RWPE1 (cell line): ENCODE measurements at regions of chr14 and their contacts with region 1.

Region 1: GRCh38 chr14:34322940-34323418 is 139.1 kb downstream of the SPTSSA start:
- DNase-seq: peak; percentile 59
- H3K27ac ChIP-seq: no peak overlapping the region
- CTCF ChIP-seq: peak; percentile 81

Region 2: GRCh38 chr14:32350020-32350419 is 1973.0 kb before region 1 on chr14:
- CTCF ChIA-PET with region 1: no interaction called
- POLR2A ChIA-PET with region 1: interaction called, 10 read pairs
- DNase-seq: no peak
- H3K27ac ChIP-seq: no peak overlapping the region
- CTCF ChIP-seq: no peak

Region 3: DNA sequence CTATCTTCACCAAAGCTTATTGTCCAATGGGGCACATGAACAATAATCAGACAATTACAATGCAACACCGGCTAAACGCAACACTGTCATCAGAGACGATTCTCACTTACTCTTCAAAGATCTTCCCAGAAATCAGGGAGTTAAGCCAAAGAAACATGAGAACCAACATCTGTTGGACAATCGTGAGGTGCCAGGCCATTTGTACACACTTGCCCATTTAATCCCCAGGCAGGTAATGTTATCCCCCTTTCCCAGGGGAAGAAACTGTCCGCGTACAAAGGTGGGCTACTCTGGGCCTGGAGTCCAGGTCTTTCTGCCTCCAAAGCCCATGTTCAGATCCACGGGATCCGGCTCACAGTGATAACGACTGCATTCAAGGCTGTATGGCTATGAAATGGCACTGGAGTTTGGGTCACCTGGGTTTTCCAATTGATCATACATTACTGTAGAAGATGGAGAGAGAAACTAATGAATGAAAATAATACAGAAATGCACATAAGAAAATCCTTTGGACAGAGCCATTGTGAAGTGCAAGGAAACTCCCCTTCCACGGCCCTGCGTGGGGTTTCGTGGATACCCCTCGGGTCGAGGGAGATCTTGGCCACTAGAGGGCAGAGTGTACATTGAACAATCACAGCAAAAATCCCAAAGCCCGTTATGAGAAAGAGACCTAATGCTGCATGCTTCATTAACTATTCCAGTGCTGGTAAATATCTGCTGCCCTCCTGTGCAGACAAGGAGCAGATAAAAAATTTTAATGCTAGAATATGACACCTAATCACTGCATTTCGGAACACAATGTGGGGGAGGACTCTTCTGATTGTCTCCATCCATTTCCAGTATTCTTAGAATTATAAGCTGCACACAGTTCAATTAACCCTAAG is 483.5 kb before region 1 on chr14:
- CTCF ChIA-PET with region 1: interaction called, 10 read pairs
- POLR2A ChIA-PET with region 1: no interaction called
- DNase-seq: peak; percentile 49
- H3K27ac ChIP-seq: no peak overlapping the region
- CTCF ChIP-seq: peak; percentile 80

Region 4: DNA sequence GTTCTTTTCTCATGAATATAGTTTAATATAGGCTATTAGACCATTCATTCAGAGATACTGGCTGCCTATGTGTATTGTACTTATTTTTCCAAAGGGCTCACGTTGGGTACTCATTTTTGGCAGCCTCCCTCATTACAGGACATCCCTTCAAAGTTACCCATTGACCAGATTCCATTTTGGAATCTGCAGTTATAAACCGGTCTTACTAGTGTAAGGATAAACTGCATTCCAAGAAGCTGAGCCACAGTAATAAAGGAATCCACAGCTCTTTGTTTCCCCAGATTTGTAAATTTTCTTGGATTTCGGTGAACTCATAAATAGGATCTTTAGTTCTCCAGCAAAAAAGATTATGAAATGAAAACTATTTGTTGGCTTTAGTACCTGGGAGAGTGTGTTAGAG is 410.3 kb after region 1 on chr14:
- CTCF ChIA-PET with region 1: no interaction called
- POLR2A ChIA-PET with region 1: no interaction called
- DNase-seq: peak; percentile 54
- H3K27ac ChIP-seq: no peak overlapping the region
- CTCF ChIP-seq: no peak